PC-9 (cell line): ENCODE measurements at regions of chr10 and their contacts with region 1.

Region 1: GRCh38 chr10:30433730-30434272 is at the start of gene MAP3K8:
- DNase-seq: peak; percentile 73 to 94
- H3K4me3 ChIP-seq: peak within 1 kb of the TSS; percentile 95
- H3K27ac ChIP-seq: peak within 1 kb of the TSS; percentile 95
- H3K4me1 ChIP-seq: peaks cover 67% of the 10 kb centered on the region
- H3K27me3 ChIP-seq: no peaks in the 10 kb centered on the region
- CTCF ChIP-seq: no peak
- total RNA-seq, gene MAP3K8: 14.3 and 16.4 TPM in 2 replicates

Region 2: GRCh38 chr10:30384701-30385201 is 49.0 kb before region 1 on chr10:
- CTCF ChIA-PET with region 1: no interaction called
- POLR2A ChIA-PET with region 1: no interaction called
- intact Hi-C with region 1: loop called (anchors 1 kb)
- DNase-seq: peak; percentile 11 to 44
- H3K4me3 ChIP-seq: no peak overlapping the region
- H3K27ac ChIP-seq: no peak overlapping the region
- H3K4me1 ChIP-seq: peaks cover 6% of the 10 kb centered on the region; the same call in 1 of the 2 replicates
- H3K27me3 ChIP-seq: no peaks in the 10 kb centered on the region
- CTCF ChIP-seq: peak; percentile 55

Region 3: GRCh38 chr10:30413996-30414576 is 19.7 kb before region 1 on chr10:
- CTCF ChIA-PET with region 1: interaction called, 5 read pairs
- POLR2A ChIA-PET with region 1: interaction called, 28 read pairs
- intact Hi-C with region 1: loop called (anchors 1 kb)
- DNase-seq: peak; percentile 25 to 63
- H3K4me3 ChIP-seq: no peak overlapping the region
- H3K27ac ChIP-seq: no peak overlapping the region
- H3K4me1 ChIP-seq: peaks cover 13% of the 10 kb centered on the region
- H3K27me3 ChIP-seq: no peaks in the 10 kb centered on the region
- CTCF ChIP-seq: peak; percentile 74

Region 4: GRCh38 chr10:30447125-30447799 is 13.5 kb after region 1 on chr10:
- CTCF ChIA-PET with region 1: no interaction called
- POLR2A ChIA-PET with region 1: interaction called, 12 read pairs
- intact Hi-C with region 1: no loop called
- DNase-seq: peak; percentile 31 to 95
- H3K4me3 ChIP-seq: peak overlapping the region; percentile 7; the same call in 1 of the 2 replicates
- H3K27ac ChIP-seq: peak overlapping the region; percentile 81
- H3K4me1 ChIP-seq: peaks cover 24% of the 10 kb centered on the region
- H3K27me3 ChIP-seq: no peaks in the 10 kb centered on the region
- CTCF ChIP-seq: no peak